OCI-LY7 (cell line): ENCODE measurements at regions of chr22 and their contacts with region 1.

Region 1: DNA sequence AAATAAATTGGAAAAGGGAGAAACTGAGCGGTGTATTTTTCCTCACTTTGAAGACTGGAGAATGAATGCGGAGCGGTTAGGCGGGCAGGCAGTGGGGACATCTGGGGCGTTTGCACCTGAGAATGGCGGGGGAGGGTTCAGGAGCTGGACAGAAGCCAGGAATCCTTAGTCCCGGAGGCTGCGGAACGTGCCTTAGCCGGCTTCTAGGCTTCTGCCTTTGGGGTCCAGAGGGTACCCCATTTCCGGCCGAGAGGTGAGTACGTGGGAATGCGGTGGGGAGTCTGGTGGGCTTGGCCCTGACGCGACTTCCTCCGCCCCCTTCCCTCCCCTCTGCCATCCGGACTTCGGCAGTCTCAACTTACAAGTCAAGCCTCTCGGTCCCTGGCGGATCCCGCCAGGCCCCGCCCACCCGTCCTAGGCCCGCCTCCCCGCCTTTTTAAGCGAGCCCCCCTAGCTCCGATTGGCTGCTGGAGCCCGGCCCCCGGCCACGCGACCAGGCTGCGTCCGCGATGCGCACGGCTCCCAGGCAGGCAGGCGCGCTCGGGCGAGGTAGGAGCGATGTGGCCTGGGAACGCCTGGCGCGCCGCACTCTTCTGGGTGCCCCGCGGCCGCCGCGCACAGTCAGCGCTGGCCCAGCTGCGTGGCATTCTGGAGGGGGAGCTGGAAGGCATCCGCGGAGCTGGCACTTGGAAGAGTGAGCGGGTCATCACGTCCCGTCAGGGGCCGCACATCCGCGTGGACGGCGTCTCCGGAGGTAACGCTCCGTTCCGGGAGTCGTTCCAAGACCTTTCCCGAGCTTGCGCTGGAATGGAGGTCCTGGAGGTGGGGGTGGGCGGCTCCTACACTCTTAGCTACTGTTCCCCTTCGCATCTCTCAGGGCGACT is at the start of gene GCAT:
- DNase-seq: peak; percentile 95
- H3K4me3 ChIP-seq: peak within 1 kb of the TSS; percentile 72
- H3K27ac ChIP-seq: no peak within 1 kb of the TSS
- H3K4me1 ChIP-seq: peaks cover 17% of the 10 kb centered on the region
- CTCF ChIP-seq: no peak
- total RNA-seq, gene GCAT: 14.6 and 20.6 TPM in 2 replicates

Region 2: GRCh38 chr22:37745548-37746365 is 61.9 kb before region 1 on chr22:
- CTCF ChIA-PET with region 1: no interaction called
- POLR2A ChIA-PET with region 1: no interaction called
- intact Hi-C with region 1: loop called (anchors 5 kb)
- DNase-seq: peak; percentile 93
- H3K4me3 ChIP-seq: peak overlapping the region; percentile 100
- H3K27ac ChIP-seq: peak overlapping the region; percentile 66
- H3K4me1 ChIP-seq: peaks cover 16% of the 10 kb centered on the region
- CTCF ChIP-seq: no peak

Region 3: GRCh38 chr22:37777122-37777687 is 30.4 kb before region 1 on chr22:
- CTCF ChIA-PET with region 1: no interaction called
- POLR2A ChIA-PET with region 1: interaction called, 3 read pairs
- intact Hi-C with region 1: loop called (anchors 2 kb)
- DNase-seq: peak; percentile 47
- H3K4me3 ChIP-seq: no peak overlapping the region
- H3K27ac ChIP-seq: peak overlapping the region; percentile 2
- H3K4me1 ChIP-seq: peaks cover 11% of the 10 kb centered on the region
- CTCF ChIP-seq: no peak